ENCODE measurements at regions of chr5 and their contacts with region 1.

Region 1: DNA sequence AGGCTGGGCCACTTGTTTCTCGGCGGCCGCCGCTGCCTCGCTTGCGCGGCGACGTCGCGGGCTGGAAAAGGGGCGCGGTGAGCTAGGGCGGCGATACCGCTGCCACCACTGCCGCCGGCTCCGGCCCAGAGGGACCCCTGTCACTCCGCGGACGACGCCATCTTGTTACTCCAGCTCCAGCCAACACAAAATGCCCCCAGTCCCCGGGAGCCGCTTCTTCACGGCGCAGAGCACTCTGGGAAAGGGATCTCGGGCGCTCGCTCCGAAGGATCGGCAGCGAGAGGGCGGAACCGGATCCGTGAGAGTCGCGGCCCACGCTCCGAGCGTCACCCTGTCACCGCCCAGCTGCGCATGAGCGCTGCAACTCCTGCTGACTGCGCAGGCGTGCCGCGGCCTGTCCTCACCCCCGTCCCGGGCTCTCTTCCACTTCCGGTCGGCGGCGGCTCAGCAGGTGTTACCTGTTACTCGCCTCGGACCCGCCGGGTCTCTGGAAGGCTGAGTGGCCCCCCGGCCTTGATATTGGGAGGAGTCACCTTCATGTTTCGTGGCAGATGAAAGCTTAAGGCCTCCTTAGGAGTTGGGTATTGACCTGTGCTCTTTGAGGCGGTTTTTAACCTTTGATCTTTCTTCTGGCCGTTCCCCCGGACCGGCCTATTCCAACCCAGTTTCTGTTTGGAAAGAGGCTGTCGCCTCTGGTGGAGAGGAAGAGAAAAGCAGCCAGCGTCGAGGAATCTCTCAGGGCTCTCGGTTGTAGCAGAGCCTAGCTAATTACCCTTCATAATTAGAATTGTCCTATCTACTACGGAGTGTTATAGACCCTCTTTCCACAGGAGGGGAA is at the start of gene CSNK1A1:
- DNase-seq: peak; percentile 99
- H3K4me3 ChIP-seq: peak within 1 kb of the TSS; percentile 81 to 97 (median 85)
- H3K27ac ChIP-seq: peak within 1 kb of the TSS; percentile 91
- H3K4me1 ChIP-seq: peaks cover 31% of the 10 kb centered on the region
- H3K27me3 ChIP-seq: no peaks in the 10 kb centered on the region
- CTCF ChIP-seq: peak; percentile 66 to 71
- POLR2A ChIP-seq: peak; percentile 94
- total RNA-seq, gene CSNK1A1: 253 and 259 TPM in 2 replicates

Region 2: GRCh38 chr5:149237662-149238061 is 313.8 kb before region 1 on chr5:
- CTCF ChIA-PET with region 1: no interaction called
- POLR2A ChIA-PET with region 1: no interaction called
- dilution Hi-C with region 1: no loop called
- intact Hi-C with region 1: no loop called
- DNase-seq: no peak
- H3K4me3 ChIP-seq: no peak overlapping the region
- H3K27ac ChIP-seq: no peak overlapping the region
- H3K4me1 ChIP-seq: peaks cover 9% of the 10 kb centered on the region
- H3K27me3 ChIP-seq: no peaks in the 10 kb centered on the region
- CTCF ChIP-seq: peak in 1 of 2 donors; percentile 31
- POLR2A ChIP-seq: no peak

Region 3: GRCh38 chr5:149448831-149449714 is 102.3 kb before region 1 on chr5:
- CTCF ChIA-PET with region 1: interaction called, 6 read pairs
- POLR2A ChIA-PET with region 1: interaction called, 4 read pairs
- dilution Hi-C with region 1: no loop called
- intact Hi-C with region 1: loop called (anchors 1 kb)
- DNase-seq: peak; percentile 56
- H3K4me3 ChIP-seq: no peak overlapping the region
- H3K27ac ChIP-seq: peak overlapping the region; percentile 90
- H3K4me1 ChIP-seq: peaks cover 63% of the 10 kb centered on the region
- H3K27me3 ChIP-seq: no peaks in the 10 kb centered on the region
- CTCF ChIP-seq: peak; percentile 22 to 23
- POLR2A ChIP-seq: no peak

Region 4: DNA sequence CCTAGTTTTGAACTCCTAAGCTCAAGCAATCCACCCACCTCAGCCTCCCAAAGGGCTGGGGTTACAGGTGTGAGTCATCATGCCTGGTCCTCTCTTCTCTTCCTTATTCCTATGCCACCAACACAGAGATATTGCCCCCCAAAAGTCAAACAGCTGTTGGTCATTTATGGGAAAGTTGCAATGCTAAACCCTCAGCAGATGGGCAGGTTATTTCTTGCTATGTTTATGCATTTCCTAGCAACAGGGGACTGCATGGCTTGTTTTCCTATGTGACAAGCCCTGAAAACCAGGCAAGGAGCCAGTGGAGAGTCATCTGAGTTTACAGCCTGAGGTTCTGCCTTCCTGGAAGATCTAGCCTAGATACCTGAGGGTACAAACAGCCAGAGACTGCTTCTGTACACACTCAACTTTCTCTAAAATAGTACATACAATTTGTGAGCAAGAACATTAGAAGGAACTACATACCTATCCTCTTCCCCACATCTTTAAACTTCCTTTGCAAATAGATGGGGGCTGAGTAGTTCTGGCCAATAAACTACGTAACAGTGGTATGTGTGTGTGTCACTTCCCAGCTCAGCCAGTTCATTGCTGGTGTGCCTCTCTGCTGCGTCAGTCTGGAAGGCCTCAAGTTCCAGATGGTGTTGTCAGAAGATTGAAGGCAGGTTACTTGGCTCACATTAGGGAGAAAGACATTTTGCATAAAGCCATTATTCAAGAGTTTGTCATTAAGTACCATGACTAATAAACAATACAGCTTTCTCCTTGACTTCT is 65.6 kb before region 1 on chr5:
- CTCF ChIA-PET with region 1: no interaction called
- POLR2A ChIA-PET with region 1: interaction called, 3 read pairs
- dilution Hi-C with region 1: no loop called
- intact Hi-C with region 1: loop called (anchors 2 kb)
- DNase-seq: peak; percentile 98
- H3K4me3 ChIP-seq: no peak overlapping the region
- H3K27ac ChIP-seq: peak overlapping the region; percentile 75
- H3K4me1 ChIP-seq: peaks cover 22% of the 10 kb centered on the region
- H3K27me3 ChIP-seq: no peaks in the 10 kb centered on the region
- CTCF ChIP-seq: no peak
- POLR2A ChIP-seq: peak; percentile 1

Region 5: GRCh38 chr5:149500922-149501582 is 50.4 kb before region 1 on chr5:
- CTCF ChIA-PET with region 1: no interaction called
- POLR2A ChIA-PET with region 1: no interaction called
- dilution Hi-C with region 1: no loop called
- intact Hi-C with region 1: no loop called
- DNase-seq: no peak
- H3K4me3 ChIP-seq: no peak overlapping the region
- H3K27ac ChIP-seq: no peak overlapping the region
- H3K4me1 ChIP-seq: no peaks in the 10 kb centered on the region
- H3K27me3 ChIP-seq: no peaks in the 10 kb centered on the region
- CTCF ChIP-seq: no peak
- POLR2A ChIP-seq: no peak

Region 6: GRCh38 chr5:149526845-149527580 is 24.4 kb before region 1 on chr5:
- CTCF ChIA-PET with region 1: interaction called, 6 read pairs
- POLR2A ChIA-PET with region 1: interaction called, 13 read pairs
- dilution Hi-C with region 1: no loop called
- intact Hi-C with region 1: no loop called
- DNase-seq: peak; percentile 62
- H3K4me3 ChIP-seq: no peak overlapping the region
- H3K27ac ChIP-seq: no peak overlapping the region
- H3K4me1 ChIP-seq: peaks cover 34% of the 10 kb centered on the region
- H3K27me3 ChIP-seq: no peaks in the 10 kb centered on the region
- CTCF ChIP-seq: no peak
- POLR2A ChIP-seq: no peak

Measured in endothelial cell of umbilical vein (primary cell).